ENCODE measurements at regions of chr13 and their contacts with region 1.

Region 1: GRCh38 chr13:101514788-101515187 is 62.3 kb downstream of the ITGBL1 start:
- DNase-seq: peak in 3 of 9 experiments; percentile 8 to 66 (median 55)
- ATAC-seq: no peak
- H3K4me3 ChIP-seq: no peak overlapping the region
- H3K4me3 Mint-ChIP-seq: no peak overlapping the region
- H3K27ac ChIP-seq: no peak overlapping the region
- H3K27ac Mint-ChIP-seq: no peak overlapping the region
- H3K4me1 ChIP-seq: no peaks in the 10 kb centered on the region
- H3K4me1 Mint-ChIP-seq: peaks cover 3% of the 10 kb centered on the region
- H3K27me3 ChIP-seq: no peaks in the 10 kb centered on the region
- H3K27me3 Mint-ChIP-seq: peaks cover 6% of the 10 kb centered on the region
- CTCF ChIP-seq: peak; percentile 60

Region 2: GRCh38 chr13:101626925-101627555 is 112.3 kb after region 1 on chr13:
- CTCF ChIA-PET with region 1: no interaction called
- POLR2A ChIA-PET with region 1: no interaction called
- intact Hi-C with region 1: no loop called
- DNase-seq: peak in 4 of 9 experiments; percentile 26 to 61 (median 40)
- ATAC-seq: peak; percentile 69
- H3K4me3 ChIP-seq: peak overlapping the region; percentile 29 to 32
- H3K4me3 Mint-ChIP-seq: peak overlapping the region; percentile 61
- H3K27ac ChIP-seq: peak overlapping the region; percentile 34 to 60
- H3K27ac Mint-ChIP-seq: peak overlapping the region; percentile 85
- H3K4me1 ChIP-seq: peaks cover 29% of the 10 kb centered on the region
- H3K4me1 Mint-ChIP-seq: peaks cover 42% of the 10 kb centered on the region
- H3K27me3 ChIP-seq: peaks cover 0 to 2% of the 10 kb centered on the region in 2 experiments
- H3K27me3 Mint-ChIP-seq: no peaks in the 10 kb centered on the region
- CTCF ChIP-seq: no peak

Region 3: GRCh38 chr13:101757446-101758039 is 242.8 kb after region 1 on chr13:
- CTCF ChIA-PET with region 1: interaction called, 9 read pairs
- POLR2A ChIA-PET with region 1: no interaction called
- intact Hi-C with region 1: loop called (anchors 1 kb)
- DNase-seq: peak in 2 of 9 experiments; percentile 36 to 53
- ATAC-seq: no peak
- H3K4me3 ChIP-seq: no peak overlapping the region
- H3K4me3 Mint-ChIP-seq: no peak overlapping the region
- H3K27ac ChIP-seq: no peak overlapping the region
- H3K27ac Mint-ChIP-seq: no peak overlapping the region
- H3K4me1 ChIP-seq: no peaks in the 10 kb centered on the region
- H3K4me1 Mint-ChIP-seq: no peaks in the 10 kb centered on the region
- H3K27me3 ChIP-seq: no peaks in the 10 kb centered on the region
- H3K27me3 Mint-ChIP-seq: peaks cover 11% of the 10 kb centered on the region
- CTCF ChIP-seq: peak; percentile 60

Region 4: GRCh38 chr13:102460801-102461200 is 946.0 kb after region 1 on chr13:
- CTCF ChIA-PET with region 1: no interaction called
- POLR2A ChIA-PET with region 1: no interaction called
- intact Hi-C with region 1: loop called in 1 of 2 experiments (anchors 2 kb)
- DNase-seq: no peak
- ATAC-seq: no peak
- H3K4me3 ChIP-seq: no peak overlapping the region
- H3K4me3 Mint-ChIP-seq: no peak overlapping the region
- H3K27ac ChIP-seq: no peak overlapping the region
- H3K27ac Mint-ChIP-seq: no peak overlapping the region
- H3K4me1 ChIP-seq: no peaks in the 10 kb centered on the region
- H3K4me1 Mint-ChIP-seq: peaks cover 5% of the 10 kb centered on the region
- H3K27me3 ChIP-seq: no peaks in the 10 kb centered on the region
- H3K27me3 Mint-ChIP-seq: peaks cover 15% of the 10 kb centered on the region
- CTCF ChIP-seq: no peak

Region 5: DNA sequence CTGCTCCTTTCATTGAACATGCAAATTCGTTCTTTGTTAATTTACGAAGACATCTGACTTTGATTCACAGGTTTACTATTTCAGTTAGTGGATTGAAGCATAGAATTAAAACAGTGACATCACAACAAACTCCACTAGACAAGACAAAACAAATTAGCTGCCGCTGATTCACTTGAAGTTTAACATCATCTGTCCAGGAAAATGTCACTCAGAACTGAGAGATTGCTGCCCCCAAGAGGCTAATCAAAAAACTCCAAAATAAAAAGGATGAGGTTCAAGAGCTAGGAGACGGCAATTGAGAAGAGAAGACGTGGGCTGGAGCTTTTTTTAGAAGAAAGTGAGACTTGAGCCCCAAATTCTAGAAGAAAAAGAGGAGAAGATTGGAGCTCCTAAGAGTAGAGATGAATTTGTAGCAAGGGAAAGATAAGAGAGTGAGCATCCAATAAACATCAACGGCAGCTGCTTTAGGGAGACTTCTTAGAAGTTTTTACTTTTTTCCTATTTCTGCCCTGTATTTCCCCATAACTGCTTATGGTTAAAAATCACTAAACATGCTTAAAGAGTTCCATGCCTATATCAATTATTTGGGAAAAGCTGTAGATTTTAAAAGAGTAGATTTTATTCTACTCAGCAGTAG is 1041.2 kb after region 1 on chr13:
- CTCF ChIA-PET with region 1: interaction called, 3 read pairs
- POLR2A ChIA-PET with region 1: no interaction called
- intact Hi-C with region 1: loop called (anchors 2 to 5 kb)
- DNase-seq: peak in 2 of 9 experiments; percentile 37 to 45
- ATAC-seq: peak; percentile 42
- H3K4me3 ChIP-seq: no peak overlapping the region
- H3K4me3 Mint-ChIP-seq: no peak overlapping the region
- H3K27ac ChIP-seq: no peak overlapping the region
- H3K27ac Mint-ChIP-seq: no peak overlapping the region
- H3K4me1 ChIP-seq: no peaks in the 10 kb centered on the region
- H3K4me1 Mint-ChIP-seq: no peaks in the 10 kb centered on the region
- H3K27me3 ChIP-seq: no peaks in the 10 kb centered on the region
- H3K27me3 Mint-ChIP-seq: peaks cover 10% of the 10 kb centered on the region
- CTCF ChIP-seq: peak; percentile 52